AG04449 (cell line): ENCODE measurements at regions of chr21 and their contacts with region 1.

Region 1: GRCh38 chr21:43789276-43790009 is at the start of gene RRP1:
- DNase-seq: no peak
- H3K4me3 ChIP-seq: peak within 1 kb of the TSS; percentile 99
- CTCF ChIP-seq: peak; percentile 84

Region 2: GRCh38 chr21:43771698-43772424 is 17.6 kb before region 1 on chr21:
- CTCF ChIA-PET with region 1: interaction called, 19 read pairs
- POLR2A ChIA-PET with region 1: interaction called, 3 read pairs
- DNase-seq: no peak
- H3K4me3 ChIP-seq: no peak overlapping the region
- CTCF ChIP-seq: no peak

Region 3: DNA sequence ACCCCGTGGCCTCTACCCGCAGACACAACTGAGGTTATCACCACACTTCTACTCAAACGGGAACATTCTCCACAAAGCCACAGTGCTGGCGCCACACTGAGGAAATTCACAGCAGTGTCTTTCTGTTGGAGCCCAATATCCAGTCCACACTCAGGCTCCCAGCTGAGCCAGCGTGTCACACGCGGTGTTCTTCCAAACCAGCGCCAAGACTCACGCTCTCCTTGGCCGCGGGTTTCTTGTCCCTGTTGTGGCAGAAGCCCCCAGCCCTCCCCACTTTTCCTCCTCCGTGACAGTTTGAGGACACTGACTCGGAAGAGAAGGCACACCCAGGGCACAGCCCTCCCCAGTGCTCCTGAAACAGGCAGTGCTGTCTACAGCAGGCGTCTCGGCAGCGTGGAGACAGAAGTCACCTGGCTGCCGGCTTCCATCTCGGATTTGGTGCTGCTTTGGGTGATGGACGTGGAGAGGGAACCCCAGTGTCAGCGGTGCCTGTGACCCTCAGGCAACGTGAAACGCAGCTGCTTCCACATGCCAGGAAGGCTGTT is 40.2 kb after region 1 on chr21:
- CTCF ChIA-PET with region 1: no interaction called
- POLR2A ChIA-PET with region 1: no interaction called
- DNase-seq: no peak
- H3K4me3 ChIP-seq: no peak overlapping the region
- CTCF ChIP-seq: no peak

Region 4: DNA sequence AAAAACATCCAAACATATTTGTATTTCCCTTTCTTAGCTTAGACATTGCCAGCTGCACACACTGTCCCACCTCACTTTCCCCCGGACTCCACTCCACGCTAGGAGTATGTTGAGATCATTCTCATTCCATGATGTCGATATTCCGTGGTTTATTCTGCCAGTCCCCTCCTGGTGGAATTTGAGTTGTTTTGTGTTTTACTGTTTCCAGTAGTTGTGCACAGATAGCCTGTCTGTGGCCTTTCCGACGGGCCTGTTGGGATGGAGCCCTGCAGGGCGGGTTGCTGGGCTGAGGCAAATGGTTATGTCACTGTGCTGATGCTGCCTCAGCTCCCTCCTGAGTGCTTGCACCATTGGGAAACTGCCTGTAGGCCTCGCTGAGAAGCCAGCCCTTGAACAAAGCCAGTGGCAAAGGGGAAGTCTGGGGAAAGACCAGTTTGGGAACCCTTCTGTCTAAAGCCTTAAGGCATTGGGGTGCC is 235.5 kb after region 1 on chr21:
- CTCF ChIA-PET with region 1: no interaction called
- POLR2A ChIA-PET with region 1: no interaction called
- DNase-seq: no peak
- H3K4me3 ChIP-seq: no peak overlapping the region
- CTCF ChIP-seq: no peak